K562 (cell line): ENCODE measurements at regions of chr22 and their contacts with region 1.

Region 1: DNA sequence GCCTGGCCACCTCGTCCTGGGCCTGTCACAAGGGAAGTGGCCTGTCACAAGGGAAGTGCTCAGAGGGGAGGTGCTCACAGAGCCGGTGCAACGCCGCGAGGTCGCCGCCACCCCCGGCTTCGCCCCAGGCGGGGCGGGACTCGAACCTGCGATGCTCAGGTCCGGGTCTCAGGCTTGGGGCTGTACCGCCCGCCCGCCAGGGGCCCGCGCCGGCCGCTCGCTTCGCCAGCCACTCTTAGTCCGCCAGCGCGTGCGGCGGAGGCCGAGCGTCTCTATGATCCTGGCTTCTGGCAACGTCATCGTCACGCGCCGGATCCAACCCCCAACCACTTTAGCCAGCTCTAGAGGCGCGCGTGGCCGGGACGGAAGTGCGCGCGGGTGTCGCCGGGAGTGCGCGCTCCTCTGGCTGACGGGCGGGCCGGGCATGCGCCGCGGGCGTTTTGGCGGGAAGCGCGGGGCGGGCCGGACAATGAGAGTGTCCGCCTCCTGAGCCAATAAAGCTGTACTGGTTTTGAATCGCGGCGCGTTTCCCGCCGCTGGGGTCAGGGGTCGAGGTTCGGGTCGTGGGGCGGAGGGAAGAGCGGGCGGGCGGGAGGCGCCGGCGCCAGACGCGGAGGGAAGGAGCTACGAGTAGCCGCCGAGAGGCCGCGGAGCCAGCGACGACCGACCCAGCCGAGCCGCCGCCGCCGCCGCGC is at the start of gene TRMT2A:
- DNase-seq: peak; percentile 100
- ATAC-seq: peak; percentile 88
- H3K4me3 ChIP-seq: peak within 1 kb of the TSS; percentile 63
- H3K27ac ChIP-seq: peak within 1 kb of the TSS; percentile 94
- H3K4me1 ChIP-seq: peaks cover 25 to 90% of the 10 kb centered on the region in 2 experiments
- H3K27me3 ChIP-seq: no peaks in the 10 kb centered on the region
- CTCF ChIP-seq: peak; percentile 56 to 62 (median 57); a peak in 4 of 6 replicates
- EP300 ChIP-seq: peak; percentile 89
- POLR2A ChIP-seq: peak; percentile 90
- RAD21 ChIP-seq: peak in 1 of 2 experiments; percentile 49; a peak in 2 of 4 replicates
- polyA plus RNA-seq, gene TRMT2A: 1.6 to 6.6 TPM

Region 2: DNA sequence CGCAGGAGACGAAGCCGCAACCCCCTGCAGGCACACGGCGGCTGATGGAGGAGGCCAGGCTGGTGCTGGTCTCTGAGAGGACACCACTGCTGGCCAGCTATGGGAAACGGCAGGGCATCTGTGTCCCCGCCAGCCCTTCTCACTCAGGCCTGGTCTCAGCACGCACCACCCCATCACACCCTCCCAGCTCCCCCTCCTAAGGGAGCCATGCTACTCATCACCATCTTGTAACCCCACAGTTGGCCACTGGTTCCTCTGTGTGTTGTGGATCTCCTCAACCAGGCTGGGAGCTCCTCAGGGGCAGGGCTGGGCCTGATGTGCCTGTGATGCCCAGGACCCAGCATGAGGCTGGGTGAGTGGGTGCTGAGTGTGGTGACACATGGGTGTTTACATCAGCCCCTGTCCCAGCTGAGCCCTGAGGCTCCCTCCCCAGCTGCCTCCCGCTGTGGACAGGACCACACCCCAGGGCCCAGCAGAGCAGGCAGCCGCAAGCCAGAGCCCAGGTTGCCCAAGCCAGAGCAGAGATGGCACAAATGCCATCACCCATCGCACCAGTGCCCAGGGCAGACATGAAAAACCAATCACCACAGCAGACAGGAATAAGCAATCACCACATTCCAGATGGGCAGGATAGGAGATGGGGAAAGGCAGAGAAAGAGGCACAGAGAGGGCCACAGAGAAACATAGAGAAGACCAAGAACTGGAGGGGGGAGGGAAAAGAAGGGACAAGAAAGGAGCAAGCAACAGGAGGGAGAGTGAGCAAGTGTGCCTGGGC is 108.7 kb before region 1 on chr22:
- CTCF ChIA-PET with region 1: no interaction called
- POLR2A ChIA-PET with region 1: interaction called, 19 read pairs
- in situ Hi-C with region 1: no loop called
- intact Hi-C with region 1: no loop called
- DNase-seq: peak in 1 of 4 experiments; percentile 54
- ATAC-seq: peak; percentile 14
- H3K4me3 ChIP-seq: no peak overlapping the region
- H3K27ac ChIP-seq: no peak overlapping the region
- H3K4me1 ChIP-seq: peaks cover 57 to 64% of the 10 kb centered on the region in 2 experiments
- H3K27me3 ChIP-seq: no peaks in the 10 kb centered on the region
- CTCF ChIP-seq: no peak
- EP300 ChIP-seq: no peak
- POLR2A ChIP-seq: no peak
- RAD21 ChIP-seq: no peak

Region 3: GRCh38 chr22:20079745-20080444 is 37.2 kb before region 1 on chr22 and contains the start of gene DGCR8:
- CTCF ChIA-PET with region 1: no interaction called
- POLR2A ChIA-PET with region 1: interaction called, 513 read pairs
- in situ Hi-C with region 1: no loop called
- intact Hi-C with region 1: loop called (anchors 1 kb)
- DNase-seq: peak; percentile 100
- ATAC-seq: peak; percentile 87
- H3K4me3 ChIP-seq: peak within 1 kb of the TSS; percentile 67
- H3K27ac ChIP-seq: peak within 1 kb of the TSS; percentile 78
- H3K4me1 ChIP-seq: peaks cover 46 to 67% of the 10 kb centered on the region in 2 experiments
- H3K27me3 ChIP-seq: no peaks in the 10 kb centered on the region
- CTCF ChIP-seq: peak in 2 of 3 experiments; percentile 8 to 9; a peak in 2 of 6 replicates
- EP300 ChIP-seq: peak; percentile 62
- POLR2A ChIP-seq: no peak
- RAD21 ChIP-seq: peak; percentile 30 to 34; a peak in 2 of 4 replicates
- polyA plus RNA-seq, gene DGCR8: 5.9 to 7.7 TPM

Region 4: GRCh38 chr22:20137671-20138416 is 20.7 kb after region 1 on chr22:
- CTCF ChIA-PET with region 1: no interaction called
- POLR2A ChIA-PET with region 1: interaction called, 10 read pairs
- in situ Hi-C with region 1: no loop called
- intact Hi-C with region 1: no loop called
- DNase-seq: peak in 1 of 4 experiments; percentile 73
- ATAC-seq: peak; percentile 29
- H3K4me3 ChIP-seq: no peak overlapping the region
- H3K27ac ChIP-seq: no peak overlapping the region
- H3K4me1 ChIP-seq: peaks cover 9 to 87% of the 10 kb centered on the region in 2 experiments
- H3K27me3 ChIP-seq: no peaks in the 10 kb centered on the region
- CTCF ChIP-seq: no peak; a peak in 1 of 6 replicates
- EP300 ChIP-seq: no peak
- POLR2A ChIP-seq: no peak
- RAD21 ChIP-seq: no peak

Region 5: GRCh38 chr22:20392983-20393908 is 276.1 kb after region 1 on chr22:
- CTCF ChIA-PET with region 1: no interaction called
- POLR2A ChIA-PET with region 1: no interaction called
- in situ Hi-C with region 1: no loop called
- intact Hi-C with region 1: no loop called
- DNase-seq: peak in 2 of 4 experiments; percentile 35 to 44
- ATAC-seq: peak; percentile 4
- H3K4me3 ChIP-seq: peak overlapping the region; percentile 52
- H3K27ac ChIP-seq: peak overlapping the region; percentile 62
- H3K4me1 ChIP-seq: peaks cover 16 to 35% of the 10 kb centered on the region in 2 experiments
- H3K27me3 ChIP-seq: peaks cover 13 to 27% of the 10 kb centered on the region in 2 experiments
- CTCF ChIP-seq: no peak
- EP300 ChIP-seq: no peak
- POLR2A ChIP-seq: no peak
- RAD21 ChIP-seq: no peak